T-cell (primary cell): ENCODE measurements at regions of chr1 and their contacts with region 1.

Region 1: GRCh38 chr1:178542560-178543356 is 29.8 kb downstream of the TEX35 start:
- DNase-seq: peak; percentile 53 to 90 (median 78)
- ATAC-seq: peak; percentile 90 to 92 (median 91)
- H3K4me3 ChIP-seq: peak overlapping the region; percentile 77 to 92
- H3K4me3 Mint-ChIP-seq: peak overlapping the region; percentile 84 to 90 (median 88)
- H3K27ac ChIP-seq: peak overlapping the region; percentile 28
- H3K27ac Mint-ChIP-seq: peak overlapping the region; percentile 61 to 88
- H3K4me1 ChIP-seq: peaks cover 0 to 19% of the 10 kb centered on the region in 2 experiments
- H3K4me1 Mint-ChIP-seq: peaks cover 9 to 21% (median 11%) of the 10 kb centered on the region in 3 donors
- H3K27me3 ChIP-seq: peaks cover 0 to 7% of the 10 kb centered on the region in 2 experiments
- H3K27me3 Mint-ChIP-seq: peaks cover 0 to 4% of the 10 kb centered on the region in 2 donors

Region 2: GRCh38 chr1:179081687-179082332 is 539.1 kb after region 1 on chr1 and contains the start of gene TOR3A:
- CTCF ChIA-PET with region 1: interaction called in 1 of 2 experiments, 11 read pairs
- POLR2A ChIA-PET with region 1: no interaction called
- DNase-seq: peak; percentile 39 to 81 (median 59)
- ATAC-seq: peak; percentile 73 to 87 (median 81)
- H3K4me3 ChIP-seq: peak within 1 kb of the TSS; percentile 75 to 83
- H3K4me3 Mint-ChIP-seq: peak within 1 kb of the TSS; percentile 94 to 98 (median 97)
- H3K27ac ChIP-seq: peak within 1 kb of the TSS; percentile 81
- H3K27ac Mint-ChIP-seq: peak within 1 kb of the TSS; percentile 92 to 93
- H3K4me1 ChIP-seq: peaks cover 11 to 36% of the 10 kb centered on the region in 2 experiments
- H3K4me1 Mint-ChIP-seq: peaks cover 26 to 35% (median 28%) of the 10 kb centered on the region in 3 donors
- H3K27me3 ChIP-seq: no peaks in the 10 kb centered on the region
- H3K27me3 Mint-ChIP-seq: no peaks in the 10 kb centered on the region
- total RNA-seq, gene TOR3A: 19.1 to 30.6 (median 23.7) TPM